GM18951 (cell line): ENCODE measurements at regions of chr12 and their contacts with region 1.

Region 1: DNA sequence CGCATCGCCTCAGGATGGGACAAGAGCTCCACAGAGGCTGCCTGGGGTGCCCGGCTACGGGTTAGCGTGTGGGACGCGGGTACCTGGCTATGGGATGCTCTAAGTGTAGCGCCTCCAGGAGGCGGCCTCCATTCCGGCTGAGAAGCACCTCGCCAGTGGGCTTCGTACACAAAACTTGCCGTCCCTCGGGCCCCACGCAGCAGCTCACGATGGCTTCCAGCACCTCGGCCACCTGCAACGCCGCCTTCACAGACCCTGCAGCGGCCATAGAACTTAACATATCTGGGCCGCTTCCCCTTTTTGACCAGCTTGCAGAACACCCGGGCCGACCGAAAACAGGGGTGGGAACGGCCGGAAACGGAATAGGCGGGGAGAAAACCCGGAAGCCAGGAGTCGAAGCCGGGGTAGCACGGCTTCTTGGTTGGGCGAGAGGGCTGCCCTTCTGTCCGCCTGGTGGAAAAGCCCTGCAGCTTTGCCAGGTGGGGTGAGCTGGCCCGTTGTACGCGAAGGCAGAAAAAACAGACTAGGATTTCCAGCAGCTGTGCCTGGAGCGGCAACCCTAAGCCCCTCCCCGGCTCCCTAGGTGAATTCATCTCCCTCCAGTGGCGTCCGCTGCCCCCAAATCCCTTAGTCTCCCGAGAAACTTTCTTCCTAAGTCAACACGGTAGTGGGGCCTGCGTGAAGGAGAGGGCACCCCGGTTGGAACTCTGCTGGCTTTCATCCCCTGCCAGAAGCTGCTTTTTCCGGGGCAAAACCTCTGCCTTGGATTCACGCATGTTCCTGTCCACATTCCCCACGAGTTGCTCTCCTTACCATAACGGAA is at the start of gene BBS10:
- POLR2A ChIP-seq: peak; percentile 89

Region 2: DNA sequence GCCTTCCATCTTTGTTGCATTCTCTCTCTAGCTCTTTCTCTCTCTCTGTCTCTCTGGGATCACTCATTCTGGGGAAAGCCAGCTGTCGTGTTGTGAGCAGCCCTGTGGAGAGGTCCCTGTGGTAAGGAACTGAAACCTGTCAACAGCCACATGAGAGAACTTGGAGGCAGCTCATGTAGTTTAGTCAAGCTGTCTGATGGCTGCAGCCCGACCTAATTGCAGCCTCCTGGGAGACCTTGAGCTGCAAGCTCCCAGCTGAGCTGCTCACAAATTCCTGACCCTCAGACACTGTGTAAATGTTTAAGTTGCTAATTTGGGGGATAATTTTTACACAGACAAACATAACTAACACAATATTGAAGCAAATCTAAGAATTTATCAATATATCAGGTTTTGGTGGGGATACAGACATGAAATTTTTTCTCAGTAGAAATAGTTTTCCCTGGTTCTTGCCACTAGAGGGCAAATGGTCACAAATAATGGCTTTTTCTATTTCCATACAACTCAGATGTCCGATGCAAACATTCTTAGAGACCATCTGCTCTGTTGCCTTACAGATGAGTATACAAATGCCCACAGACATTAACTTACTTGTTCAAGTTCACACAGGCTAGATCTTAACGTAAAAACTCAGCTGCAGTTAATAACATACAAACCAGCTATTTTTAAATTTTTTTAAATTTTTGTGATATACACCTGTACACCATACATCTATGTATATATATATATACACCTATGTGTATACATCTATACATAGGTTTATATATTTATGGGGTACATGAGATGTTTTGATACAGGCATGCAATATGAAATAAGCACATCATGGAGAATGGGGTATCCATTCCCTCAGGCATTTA is 821.4 kb before region 1 on chr12:
- in situ Hi-C with region 1: loop called (anchors 25 kb)
- POLR2A ChIP-seq: no peak

Region 3: DNA sequence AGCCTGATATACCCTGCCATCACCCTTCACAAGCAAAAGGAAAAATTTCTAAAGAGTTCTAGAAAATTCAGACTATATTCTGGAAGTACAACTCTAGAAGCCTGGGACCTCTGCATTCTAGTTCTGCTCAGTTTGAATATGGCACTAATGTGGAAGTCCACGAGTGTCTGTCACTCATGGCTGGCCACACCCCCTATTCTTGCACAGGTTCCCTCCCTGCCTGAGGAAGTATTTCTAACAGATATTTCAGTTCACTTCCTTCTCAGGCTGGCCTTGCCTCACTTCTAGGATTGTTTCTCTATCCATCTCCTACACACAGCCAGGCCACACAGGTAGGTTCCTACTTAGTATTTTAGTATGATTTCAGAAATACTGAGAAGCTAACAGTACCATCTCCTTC is 384.1 kb before region 1 on chr12:
- in situ Hi-C with region 1: no loop called
- POLR2A ChIP-seq: no peak

Region 4: GRCh38 chr12:76083904-76084862 is 264.1 kb before region 1 on chr12 and contains the start of gene NAP1L1:
- in situ Hi-C with region 1: loop called (anchors 10 kb)
- POLR2A ChIP-seq: peak; percentile 96